GM12878 (cell line): ENCODE measurements at regions of chr12 and their contacts with region 1.

Region 1: DNA sequence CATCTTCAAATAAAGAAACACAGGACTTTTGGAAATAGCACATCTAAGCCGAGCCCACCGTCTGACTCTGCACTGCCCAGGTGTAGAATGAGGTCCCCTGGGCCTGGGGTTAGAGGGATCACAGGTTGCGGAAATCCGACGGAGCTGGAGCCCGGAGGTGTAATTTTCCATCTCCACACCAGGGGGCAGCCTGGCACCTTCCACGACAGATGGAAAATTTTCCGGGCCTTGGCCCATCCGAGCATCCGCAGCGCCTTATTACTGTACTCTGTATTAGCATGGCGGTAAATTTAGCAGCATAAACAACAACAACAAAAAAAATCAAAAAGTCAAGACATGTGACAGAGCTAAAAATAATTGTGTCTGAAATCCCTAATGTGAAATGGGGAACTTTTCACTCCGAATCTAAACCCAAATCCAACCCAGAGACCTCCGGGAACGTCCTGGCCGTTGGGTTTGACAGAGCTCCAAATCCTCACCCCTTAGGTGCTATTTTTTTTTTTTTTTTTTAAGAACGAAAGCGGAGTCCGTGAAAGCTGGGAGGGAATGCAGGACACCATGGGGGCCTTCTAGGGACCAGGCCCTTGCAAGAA is 93.9 kb downstream of the KSR2 start:
- DNase-seq: no peak
- ATAC-seq: peak; percentile 90
- H3K4me3 ChIP-seq: no peak overlapping the region
- H3K27ac ChIP-seq: no peak overlapping the region
- H3K4me1 ChIP-seq: no peaks in the 10 kb centered on the region
- H3K27me3 ChIP-seq: no peaks in the 10 kb centered on the region
- CTCF ChIP-seq: peak; percentile 85 to 89 (median 86)
- EP300 ChIP-seq: no peak
- POLR2A ChIP-seq: no peak
- RAD21 ChIP-seq: peak; percentile 89

Region 2: GRCh38 chr12:117580718-117581062 is 294.2 kb before region 1 on chr12:
- CTCF ChIA-PET with region 1: no interaction called
- POLR2A ChIA-PET with region 1: no interaction called
- RAD21 ChIA-PET with region 1: no interaction called
- SMC1A ChIA-PET with region 1: no interaction called
- in situ Hi-C with region 1: no loop called
- intact Hi-C with region 1: no loop called
- DNase-seq: no peak
- ATAC-seq: peak; percentile 84
- H3K4me3 ChIP-seq: no peak overlapping the region
- H3K27ac ChIP-seq: no peak overlapping the region
- H3K4me1 ChIP-seq: no peaks in the 10 kb centered on the region
- H3K27me3 ChIP-seq: peaks cover 0 to 2% of the 10 kb centered on the region in 2 experiments; a peak in 1 of 4 replicates
- CTCF ChIP-seq: no peak
- EP300 ChIP-seq: no peak
- POLR2A ChIP-seq: no peak
- RAD21 ChIP-seq: no peak

Region 3: GRCh38 chr12:117890137-117890536 is 15.2 kb after region 1 on chr12:
- CTCF ChIA-PET with region 1: interaction called, 25 read pairs
- POLR2A ChIA-PET with region 1: no interaction called
- RAD21 ChIA-PET with region 1: interaction called, 5 read pairs
- SMC1A ChIA-PET with region 1: interaction called, 7 read pairs
- in situ Hi-C with region 1: no loop called
- intact Hi-C with region 1: no loop called
- DNase-seq: no peak
- ATAC-seq: peak; percentile 85
- H3K4me3 ChIP-seq: no peak overlapping the region
- H3K27ac ChIP-seq: no peak overlapping the region
- H3K4me1 ChIP-seq: peaks cover 14% of the 10 kb centered on the region
- H3K27me3 ChIP-seq: no peaks in the 10 kb centered on the region
- CTCF ChIP-seq: peak in 2 of 3 experiments; percentile 18 to 31; a peak in 1 of 6 replicates
- EP300 ChIP-seq: no peak
- POLR2A ChIP-seq: no peak
- RAD21 ChIP-seq: no peak

Region 4: DNA sequence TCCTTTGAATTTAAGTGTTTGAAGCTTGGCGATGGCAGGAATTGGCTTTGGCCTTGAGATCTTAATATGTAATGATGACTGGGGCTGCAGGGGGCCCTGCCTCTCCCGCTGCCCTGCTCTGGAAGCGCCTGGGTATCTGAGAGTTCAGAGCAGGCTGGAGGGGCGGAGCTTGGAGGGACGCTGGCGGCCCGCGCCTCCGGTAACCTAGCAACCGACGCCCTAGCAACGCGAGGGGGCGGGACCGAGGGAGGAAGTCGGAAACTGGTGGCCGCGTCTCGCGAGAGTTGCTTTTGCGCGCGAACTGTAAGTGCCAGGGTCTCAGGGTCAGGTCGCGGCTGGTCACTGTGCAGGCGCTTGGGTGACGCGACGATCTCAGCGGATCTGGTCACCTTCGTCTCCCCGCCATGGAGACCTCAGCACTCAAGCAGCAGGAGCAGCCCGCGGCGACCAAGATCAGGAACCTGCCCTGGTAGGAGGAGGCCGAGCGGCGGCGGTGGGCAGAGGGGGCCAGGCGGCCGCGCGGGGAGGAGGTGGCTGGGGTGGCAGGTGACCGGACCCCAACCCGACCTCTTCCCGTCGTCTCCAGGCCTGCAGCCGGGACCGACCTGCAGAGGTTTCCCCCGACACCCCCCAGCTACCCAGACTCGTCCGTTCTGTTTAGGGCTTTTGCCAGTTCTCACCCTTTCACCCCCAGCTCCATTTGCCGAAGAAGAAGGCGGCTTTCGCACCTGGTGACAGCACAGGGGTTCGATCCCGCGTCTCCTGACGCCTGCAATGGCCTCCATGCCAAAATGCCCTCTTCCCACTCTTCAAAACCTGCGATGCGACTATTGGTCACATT is 141.7 kb after region 1 on chr12 and contains the start of gene RFC5:
- CTCF ChIA-PET with region 1: interaction called, 6 read pairs
- POLR2A ChIA-PET with region 1: no interaction called
- RAD21 ChIA-PET with region 1: interaction called, 7 read pairs
- SMC1A ChIA-PET with region 1: interaction called, 9 read pairs
- in situ Hi-C with region 1: no loop called
- intact Hi-C with region 1: loop called (anchors 5 kb)
- DNase-seq: peak; percentile 87
- ATAC-seq: peak; percentile 97
- H3K4me3 ChIP-seq: peak within 1 kb of the TSS; percentile 69
- H3K27ac ChIP-seq: peak within 1 kb of the TSS; percentile 82
- H3K4me1 ChIP-seq: 0 out of 2 replicates have a peak, but pooled peaks cover 3% of the 10 kb centered on the region
- H3K27me3 ChIP-seq: no peaks in the 10 kb centered on the region
- CTCF ChIP-seq: 0 out of 6 replicates have a peak, but pooled peaks of 1 of the 3 experiments have one; percentile 3
- EP300 ChIP-seq: no peak
- POLR2A ChIP-seq: peak; percentile 97
- RAD21 ChIP-seq: no peak
- polyA plus RNA-seq, gene RFC5: 47.3 to 73.3 TPM

Region 5: GRCh38 chr12:118055144-118055557 is 180.2 kb after region 1 on chr12:
- CTCF ChIA-PET with region 1: interaction called, 72 read pairs
- POLR2A ChIA-PET with region 1: interaction called, 3 read pairs
- RAD21 ChIA-PET with region 1: interaction called, 44 read pairs
- SMC1A ChIA-PET with region 1: interaction called, 28 read pairs
- in situ Hi-C with region 1: loop called (anchors 5 kb)
- intact Hi-C with region 1: loop called (anchors 1 kb)
- DNase-seq: no peak
- ATAC-seq: peak; percentile 93
- H3K4me3 ChIP-seq: no peak overlapping the region
- H3K27ac ChIP-seq: no peak overlapping the region
- H3K4me1 ChIP-seq: no peaks in the 10 kb centered on the region
- H3K27me3 ChIP-seq: no peaks in the 10 kb centered on the region
- CTCF ChIP-seq: peak; percentile 71 to 73 (median 71)
- EP300 ChIP-seq: no peak
- POLR2A ChIP-seq: no peak
- RAD21 ChIP-seq: peak; percentile 69

Region 6: DNA sequence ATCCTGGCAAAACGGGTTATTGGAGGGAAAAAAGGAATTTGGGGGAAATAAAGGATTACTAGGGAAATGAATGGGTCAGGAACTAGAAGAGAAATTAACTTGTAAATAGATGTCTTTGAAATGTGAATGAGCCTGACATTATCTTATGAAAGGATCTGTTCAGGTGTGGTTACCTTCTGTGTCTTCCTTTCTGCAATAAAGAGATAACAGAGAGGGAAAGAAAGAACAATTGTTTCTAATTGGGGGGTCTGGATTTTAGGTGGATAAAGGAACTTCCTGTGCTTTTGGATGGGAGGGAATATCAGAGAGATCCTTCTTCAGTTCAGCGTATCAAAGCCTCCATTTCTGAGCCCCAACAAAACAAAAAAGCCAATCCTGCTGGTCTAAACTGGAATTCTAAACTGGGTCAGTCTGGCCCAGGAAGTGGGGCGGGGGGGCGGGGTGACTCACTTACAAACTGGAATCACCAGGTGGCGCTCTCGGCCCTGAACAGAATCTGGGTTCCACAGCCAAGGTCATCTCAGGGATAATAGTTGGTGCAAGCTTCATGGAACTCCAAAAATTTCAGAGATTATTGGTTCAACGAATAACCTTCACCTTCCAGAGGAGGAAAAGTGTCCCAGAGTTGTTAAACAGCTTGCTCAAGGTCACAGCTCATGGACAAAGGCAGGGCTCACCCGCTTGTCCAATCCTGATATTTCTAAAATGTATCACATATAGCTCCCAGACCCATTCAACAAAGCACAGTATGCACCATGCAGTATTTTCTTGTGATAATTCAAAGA is 245.8 kb after region 1 on chr12:
- CTCF ChIA-PET with region 1: interaction called, 39 read pairs
- POLR2A ChIA-PET with region 1: interaction called, 3 read pairs
- RAD21 ChIA-PET with region 1: interaction called, 21 read pairs
- SMC1A ChIA-PET with region 1: interaction called, 18 read pairs
- in situ Hi-C with region 1: no loop called
- intact Hi-C with region 1: no loop called
- DNase-seq: no peak
- ATAC-seq: peak; percentile 97
- H3K4me3 ChIP-seq: no peak overlapping the region
- H3K27ac ChIP-seq: peak overlapping the region; percentile 83
- H3K4me1 ChIP-seq: no peaks in the 10 kb centered on the region; the same call in 1 of the 2 replicates
- H3K27me3 ChIP-seq: no peaks in the 10 kb centered on the region
- CTCF ChIP-seq: peak; percentile 50 to 70 (median 64)
- EP300 ChIP-seq: no peak
- POLR2A ChIP-seq: no peak
- RAD21 ChIP-seq: peak; percentile 70